ENCODE measurements at regions of chr10 and their contacts with region 1.

Region 1: DNA sequence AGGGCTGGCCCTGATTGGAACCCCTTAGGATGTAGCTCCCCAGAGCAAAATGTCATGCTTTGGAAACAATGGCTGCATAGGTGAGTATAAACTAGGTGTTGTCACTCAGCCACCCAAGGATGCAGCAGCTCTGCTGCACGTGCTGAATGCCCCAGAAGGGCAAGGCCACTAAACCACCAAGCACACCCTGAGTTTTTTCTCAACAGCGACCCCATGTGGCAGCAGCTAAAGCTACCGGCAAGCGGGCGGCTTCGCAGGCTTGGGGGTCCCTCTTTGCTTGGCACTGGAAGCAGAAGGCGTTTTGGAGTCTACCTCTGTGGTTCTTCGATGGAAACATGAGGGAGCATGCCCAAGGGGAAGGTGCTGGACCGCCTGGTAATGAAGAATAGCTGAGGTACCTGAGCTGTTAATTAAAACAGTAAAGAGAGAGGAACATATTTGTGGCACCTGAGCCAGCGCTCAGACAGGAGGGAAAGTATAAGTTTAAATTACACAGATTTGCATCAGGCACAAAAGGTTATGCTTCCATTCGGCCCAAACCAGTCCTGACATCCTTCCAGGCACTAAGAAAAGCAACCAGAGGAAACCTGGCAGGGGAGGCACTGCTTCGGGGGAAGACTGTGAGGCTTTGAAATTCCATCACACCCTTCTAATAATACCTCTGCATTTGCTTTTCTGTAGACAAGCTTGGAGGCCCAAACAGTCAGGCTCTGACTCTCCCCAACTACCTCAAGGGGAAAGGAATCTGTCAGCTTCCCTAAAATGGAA is 152.1 kb downstream of the GFRA1 start:
- DNase-seq: peak; percentile 80
- ATAC-seq: peak; percentile 78
- H3K4me3 Mint-ChIP-seq: no peak overlapping the region
- H3K27ac Mint-ChIP-seq: no peak overlapping the region
- H3K4me1 Mint-ChIP-seq: peaks cover 23% of the 10 kb centered on the region
- H3K27me3 Mint-ChIP-seq: peaks cover 40% of the 10 kb centered on the region
- CTCF ChIP-seq: peak; percentile 79

Region 2: GRCh38 chr10:115566829-115567228 is 554.0 kb before region 1 on chr10:
- CTCF ChIA-PET with region 1: no interaction called
- POLR2A ChIA-PET with region 1: no interaction called
- DNase-seq: no peak
- ATAC-seq: no peak
- H3K4me3 Mint-ChIP-seq: no peak overlapping the region
- H3K27ac Mint-ChIP-seq: no peak overlapping the region
- H3K4me1 Mint-ChIP-seq: peaks cover 9% of the 10 kb centered on the region
- H3K27me3 Mint-ChIP-seq: no peaks in the 10 kb centered on the region
- CTCF ChIP-seq: no peak

Region 3: DNA sequence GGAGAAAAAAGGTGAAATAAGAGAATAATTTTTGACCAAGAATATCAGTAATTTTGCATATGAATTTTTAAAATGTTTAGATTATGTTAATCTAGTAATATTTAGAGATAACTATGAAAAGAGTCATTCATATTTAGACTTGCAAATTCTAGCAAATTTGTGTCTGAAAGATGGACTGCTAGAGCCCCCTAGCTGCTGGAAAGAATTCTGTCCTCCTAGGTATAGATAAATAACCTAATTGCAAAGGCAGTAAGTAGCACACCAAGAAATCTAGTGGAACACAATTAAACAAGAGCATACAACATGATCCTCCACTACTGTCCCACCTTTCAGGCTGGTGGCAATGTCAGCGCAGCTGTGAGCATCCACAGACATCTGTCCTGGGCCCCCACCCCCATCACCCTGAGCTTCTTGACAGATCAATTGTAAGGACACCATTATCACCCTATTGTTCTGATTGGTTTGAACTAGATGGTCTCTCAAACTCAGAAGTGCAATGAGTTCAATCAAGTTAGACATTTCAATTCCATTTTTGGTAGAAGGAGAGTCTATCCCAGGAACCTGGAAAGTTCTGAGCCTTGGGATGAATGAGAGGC is 167.1 kb after region 1 on chr10:
- CTCF ChIA-PET with region 1: interaction called, 10 read pairs
- POLR2A ChIA-PET with region 1: no interaction called
- DNase-seq: peak; percentile 36
- ATAC-seq: peak; percentile 36; the same call in 1 of the 2 replicates
- H3K4me3 Mint-ChIP-seq: no peak overlapping the region
- H3K27ac Mint-ChIP-seq: no peak overlapping the region
- H3K4me1 Mint-ChIP-seq: peaks cover 2% of the 10 kb centered on the region
- H3K27me3 Mint-ChIP-seq: no peaks in the 10 kb centered on the region
- CTCF ChIP-seq: no peak; the same call in 1 of the 2 replicates

Measured in WTC11 (cell line).